IMR-90 (cell line): ENCODE measurements at regions of chr3 and their contacts with region 1.

Region 1: DNA sequence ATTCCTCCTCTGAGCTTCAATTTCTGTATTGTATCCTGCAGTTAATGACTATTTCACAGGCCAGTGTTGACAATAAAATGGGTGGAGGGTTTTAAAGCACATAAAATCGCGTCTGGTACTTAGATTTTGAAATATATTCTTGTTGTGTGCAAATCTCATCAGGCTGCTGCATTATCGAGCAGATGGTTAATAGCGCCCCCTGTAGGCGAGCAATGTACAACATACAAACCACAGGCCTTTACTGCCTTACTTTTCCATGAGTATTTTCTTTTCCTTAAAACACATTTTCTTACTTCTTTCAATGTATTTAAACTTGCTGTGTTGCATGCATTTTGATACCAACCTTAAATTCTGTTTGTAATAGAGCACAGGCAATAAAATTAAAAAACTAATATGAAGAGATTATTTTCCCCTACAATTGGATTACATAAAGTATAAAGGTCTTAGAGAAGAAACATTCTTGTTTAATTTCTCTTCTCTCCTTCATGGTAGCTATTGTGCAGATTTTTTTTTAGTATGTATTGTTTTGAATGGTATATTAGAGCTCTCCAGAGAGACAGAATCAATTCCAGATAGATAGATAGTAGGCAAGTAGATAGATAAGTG is 608.4 kb downstream of the CADM2 start:
- DNase-seq: peak; percentile 29
- ATAC-seq: no peak
- H3K4me3 ChIP-seq: no peak overlapping the region
- H3K27ac ChIP-seq: no peak overlapping the region
- H3K4me1 ChIP-seq: no peaks in the 10 kb centered on the region
- H3K27me3 ChIP-seq: no peaks in the 10 kb centered on the region
- CTCF ChIP-seq: peak; percentile 44
- POLR2A ChIP-seq: no peak
- RAD21 ChIP-seq: no peak; the same call in 1 of the 2 replicates

Region 2: GRCh38 chr3:85255949-85256348 is 311.2 kb before region 1 on chr3:
- CTCF ChIA-PET with region 1: no interaction called
- POLR2A ChIA-PET with region 1: no interaction called
- dilution Hi-C with region 1: no loop called
- in situ Hi-C with region 1: no loop called
- intact Hi-C with region 1: no loop called
- DNase-seq: peak; percentile 40
- ATAC-seq: peak; percentile 49; the same call in 1 of the 2 replicates
- H3K4me3 ChIP-seq: no peak overlapping the region
- H3K27ac ChIP-seq: no peak overlapping the region
- H3K4me1 ChIP-seq: no peaks in the 10 kb centered on the region
- H3K27me3 ChIP-seq: no peaks in the 10 kb centered on the region
- CTCF ChIP-seq: no peak
- POLR2A ChIP-seq: no peak
- RAD21 ChIP-seq: no peak

Region 3: GRCh38 chr3:85304359-85304964 is 262.7 kb before region 1 on chr3:
- CTCF ChIA-PET with region 1: no interaction called
- POLR2A ChIA-PET with region 1: no interaction called
- dilution Hi-C with region 1: no loop called
- in situ Hi-C with region 1: no loop called
- intact Hi-C with region 1: loop called (anchors 5 kb)
- DNase-seq: no peak
- ATAC-seq: no peak
- H3K4me3 ChIP-seq: no peak overlapping the region
- H3K27ac ChIP-seq: no peak overlapping the region
- H3K4me1 ChIP-seq: no peaks in the 10 kb centered on the region
- H3K27me3 ChIP-seq: no peaks in the 10 kb centered on the region
- CTCF ChIP-seq: peak; percentile 35; the same call in 1 of the 2 replicates
- POLR2A ChIP-seq: no peak
- RAD21 ChIP-seq: no peak

Region 4: DNA sequence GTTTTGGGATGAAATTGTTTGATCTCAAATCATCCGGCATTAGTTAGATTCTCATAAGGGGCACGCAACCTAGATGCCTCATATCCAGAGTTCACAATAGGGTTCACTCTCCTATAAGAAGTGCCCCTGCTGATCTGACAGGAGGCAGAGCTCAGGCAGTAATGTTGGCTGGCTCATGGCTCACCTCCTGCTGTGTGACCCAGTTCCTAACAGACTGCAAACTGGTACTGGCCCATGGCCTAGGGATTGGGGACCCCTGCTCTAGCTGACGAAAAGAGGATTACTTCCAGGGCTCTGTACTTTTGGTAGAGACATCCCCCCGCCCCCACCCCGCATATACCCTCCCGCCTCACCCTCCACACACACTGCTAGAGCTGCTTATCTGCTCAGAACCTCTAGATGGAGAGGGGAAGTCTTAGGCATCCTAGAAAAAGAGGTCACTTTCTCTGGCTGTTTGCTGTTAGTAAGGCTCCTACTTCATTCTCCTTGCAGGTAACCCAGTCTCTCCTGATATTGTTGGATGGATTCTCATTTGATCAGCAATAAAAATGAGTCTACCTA is 314.7 kb after region 1 on chr3:
- CTCF ChIA-PET with region 1: no interaction called
- POLR2A ChIA-PET with region 1: no interaction called
- dilution Hi-C with region 1: no loop called
- in situ Hi-C with region 1: no loop called
- intact Hi-C with region 1: no loop called
- DNase-seq: no peak
- ATAC-seq: no peak
- H3K4me3 ChIP-seq: no peak overlapping the region
- H3K27ac ChIP-seq: no peak overlapping the region
- H3K4me1 ChIP-seq: no peaks in the 10 kb centered on the region
- H3K27me3 ChIP-seq: no peaks in the 10 kb centered on the region
- CTCF ChIP-seq: no peak
- POLR2A ChIP-seq: no peak
- RAD21 ChIP-seq: no peak